ENCODE measurements at regions of chr6 and their contacts with region 1.

Region 1: GRCh38 chr6:157800420-157801237 is 22.4 kb upstream of the SNX9 start:
- DNase-seq: peak in 1 of 9 donors; percentile 42
- ATAC-seq: peak; percentile 50
- H3K4me3 ChIP-seq: no peak overlapping the region
- H3K4me3 Mint-ChIP-seq: peak overlapping the region in 1 of 10 donors; percentile 28
- H3K27ac ChIP-seq: no peak overlapping the region
- H3K27ac Mint-ChIP-seq: peak overlapping the region in 3 of 9 donors; percentile 3 to 19 (median 3)
- H3K4me1 ChIP-seq: no peaks in the 10 kb centered on the region
- H3K4me1 Mint-ChIP-seq: peaks cover 9 to 27% (median 17%) of the 10 kb centered on the region in 7 donors
- H3K27me3 ChIP-seq: no peaks in the 10 kb centered on the region
- H3K27me3 Mint-ChIP-seq: peaks cover 0 to 48% (median 0%) of the 10 kb centered on the region in 5 donors

Region 2: DNA sequence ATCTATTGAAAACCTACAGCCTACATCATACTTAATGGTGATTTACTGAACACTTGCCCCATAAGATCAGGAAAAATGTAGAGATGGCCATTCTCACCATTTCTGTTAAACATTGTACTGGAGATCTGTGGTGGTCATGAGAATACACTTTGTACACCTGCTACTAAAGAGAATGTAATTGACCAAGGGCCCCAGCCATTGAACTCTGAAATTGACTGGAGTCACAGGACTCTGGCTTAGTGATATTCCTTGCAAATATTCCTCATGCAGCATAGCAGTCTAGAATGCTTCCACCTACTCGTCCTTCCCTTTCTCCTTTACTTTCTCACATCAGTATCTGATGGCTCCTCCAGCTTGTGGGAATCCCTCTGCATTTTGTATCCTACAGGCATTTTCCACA is 15.0 kb before region 1 on chr6:
- CTCF ChIA-PET with region 1: no interaction called
- POLR2A ChIA-PET with region 1: interaction called, 5 read pairs
- intact Hi-C with region 1: loop called in 1 of 2 experiments (anchors 2 kb)
- DNase-seq: no peak
- ATAC-seq: no peak
- H3K4me3 ChIP-seq: no peak overlapping the region
- H3K4me3 Mint-ChIP-seq: no peak overlapping the region
- H3K27ac ChIP-seq: no peak overlapping the region
- H3K27ac Mint-ChIP-seq: no peak overlapping the region
- H3K4me1 ChIP-seq: no peaks in the 10 kb centered on the region
- H3K4me1 Mint-ChIP-seq: peaks cover 1 to 4% (median 3%) of the 10 kb centered on the region in 7 donors
- H3K27me3 ChIP-seq: no peaks in the 10 kb centered on the region
- H3K27me3 Mint-ChIP-seq: peaks cover 0 to 55% (median 0%) of the 10 kb centered on the region in 5 donors

Region 3: GRCh38 chr6:157813757-157814455 is 13.3 kb after region 1 on chr6:
- CTCF ChIA-PET with region 1: interaction called, 3 read pairs
- POLR2A ChIA-PET with region 1: no interaction called
- intact Hi-C with region 1: loop called in 1 of 2 experiments (anchors 2 kb)
- DNase-seq: no peak
- ATAC-seq: no peak
- H3K4me3 ChIP-seq: no peak overlapping the region
- H3K4me3 Mint-ChIP-seq: peak overlapping the region in 5 of 10 donors; percentile 11 to 72 (median 70)
- H3K27ac ChIP-seq: peak overlapping the region; percentile 54
- H3K27ac Mint-ChIP-seq: peak overlapping the region in 8 of 9 donors; percentile 85 to 92 (median 89)
- H3K4me1 ChIP-seq: peaks cover 0 to 41% of the 10 kb centered on the region in 2 donors
- H3K4me1 Mint-ChIP-seq: peaks cover 22 to 75% (median 68%) of the 10 kb centered on the region in 7 donors
- H3K27me3 ChIP-seq: no peaks in the 10 kb centered on the region
- H3K27me3 Mint-ChIP-seq: peaks cover 0 to 50% (median 0%) of the 10 kb centered on the region in 5 donors

Region 4: DNA sequence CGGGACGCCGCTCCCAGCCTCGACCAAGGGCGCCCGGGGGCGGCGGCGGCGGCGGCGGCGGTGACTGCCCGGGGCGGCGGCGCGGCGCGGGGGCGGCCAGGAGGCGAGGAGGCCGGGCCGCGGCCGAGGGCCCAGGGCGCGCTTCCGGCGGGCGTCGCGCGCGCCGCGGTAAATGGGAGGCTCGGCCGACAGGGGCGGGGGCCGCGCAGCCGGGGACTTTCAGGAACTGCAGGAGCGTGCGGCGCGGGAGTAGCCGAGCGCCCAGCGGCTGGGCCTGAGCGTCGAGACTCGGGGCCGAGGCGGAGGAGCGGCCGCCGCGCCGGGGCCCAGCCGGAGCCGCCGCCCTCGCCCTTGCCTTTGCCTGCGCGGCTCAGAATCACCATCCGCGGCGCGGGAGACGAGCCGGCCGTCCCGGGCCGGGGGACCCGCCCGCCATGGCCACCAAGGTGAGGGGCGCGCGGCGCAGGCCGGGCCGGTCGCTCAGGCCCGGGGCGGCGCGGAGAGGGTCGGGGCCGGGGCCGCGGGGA is 22.4 kb after region 1 on chr6 and contains the start of gene SNX9:
- CTCF ChIA-PET with region 1: no interaction called
- POLR2A ChIA-PET with region 1: no interaction called
- intact Hi-C with region 1: loop called in 1 of 2 experiments (anchors 2 kb)
- DNase-seq: peak in 8 of 9 donors; percentile 27 to 74 (median 56)
- ATAC-seq: peak; percentile 77
- H3K4me3 ChIP-seq: peak within 1 kb of the TSS; percentile 60
- H3K4me3 Mint-ChIP-seq: peak within 1 kb of the TSS; percentile 88 to 100 (median 96)
- H3K27ac ChIP-seq: peak within 1 kb of the TSS; percentile 96
- H3K27ac Mint-ChIP-seq: peak within 1 kb of the TSS; percentile 95 to 100 (median 99)
- H3K4me1 ChIP-seq: peaks cover 9 to 16% of the 10 kb centered on the region in 2 donors
- H3K4me1 Mint-ChIP-seq: peaks cover 15 to 70% (median 57%) of the 10 kb centered on the region in 7 donors
- H3K27me3 ChIP-seq: no peaks in the 10 kb centered on the region
- H3K27me3 Mint-ChIP-seq: peaks cover 0 to 42% (median 0%) of the 10 kb centered on the region in 5 donors
- total RNA-seq, gene SNX9: 13.4 to 39.2 (median 36.4) TPM

Measured in naive thymus-derived CD4-positive, alpha-beta T cell (primary cell).